BJ (cell line): ENCODE measurements at regions of chr3 and their contacts with region 1.

Region 1: GRCh38 chr3:50327943-50328691 is at the start of gene TUSC2:
- DNase-seq: peak; percentile 74
- H3K4me3 ChIP-seq: peak within 1 kb of the TSS; percentile 72
- H3K27me3 ChIP-seq: no peaks in the 10 kb centered on the region
- CTCF ChIP-seq: no peak
- polyA plus RNA-seq, gene TUSC2: 33.8 and 38.9 TPM in 2 replicates

Region 2: GRCh38 chr3:50298836-50299637 is 29.1 kb before region 1 on chr3 and contains the starts of genes HYAL3 and NAA80:
- CTCF ChIA-PET with region 1: interaction called, 20 read pairs
- POLR2A ChIA-PET with region 1: interaction called, 3 read pairs
- DNase-seq: peak; percentile 98
- H3K4me3 ChIP-seq: peak within 1 kb of the TSS; percentile 54
- H3K27me3 ChIP-seq: no peaks in the 10 kb centered on the region
- CTCF ChIP-seq: peak; percentile 41
- polyA plus RNA-seq, gene HYAL3: 7.1 and 8.5 TPM in 2 replicates
- polyA plus RNA-seq, gene NAA80: 3.6 and 5.8 TPM in 2 replicates

Region 3: DNA sequence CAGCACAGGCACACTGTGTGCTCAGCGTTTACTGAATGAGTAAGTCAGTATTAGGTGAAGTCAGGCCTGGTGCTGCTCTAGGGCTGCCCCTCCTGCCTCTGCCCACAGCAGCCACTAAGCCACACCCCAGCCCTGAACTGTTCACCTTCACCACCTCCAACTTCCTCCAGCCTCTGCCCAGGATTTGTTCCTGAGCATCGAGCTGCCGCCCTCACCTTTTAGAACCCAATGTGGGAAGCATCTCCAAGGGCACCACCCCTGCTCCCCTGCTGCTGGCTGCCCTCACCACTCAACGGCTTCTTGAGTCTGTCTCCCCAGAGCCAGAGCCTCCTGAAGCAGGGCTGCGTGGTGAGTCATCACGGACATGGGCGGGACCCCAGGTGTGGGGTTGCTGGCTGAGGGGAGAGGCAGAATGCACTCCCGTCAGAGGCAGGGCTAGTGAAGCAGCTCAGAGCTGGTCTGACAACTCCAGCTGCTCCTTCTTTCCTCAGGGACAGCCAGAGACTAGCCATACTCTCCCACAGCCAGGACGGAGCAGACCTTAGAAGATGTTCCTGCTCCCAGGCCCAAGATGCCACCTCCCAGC is 11.4 kb before region 1 on chr3:
- CTCF ChIA-PET with region 1: interaction called, 15 read pairs
- POLR2A ChIA-PET with region 1: no interaction called
- DNase-seq: no peak
- H3K4me3 ChIP-seq: no peak overlapping the region
- H3K27me3 ChIP-seq: no peaks in the 10 kb centered on the region
- CTCF ChIP-seq: no peak

Region 4: GRCh38 chr3:50388016-50388719 is 60.1 kb after region 1 on chr3:
- CTCF ChIA-PET with region 1: no interaction called
- POLR2A ChIA-PET with region 1: no interaction called
- DNase-seq: no peak
- H3K4me3 ChIP-seq: no peak overlapping the region
- H3K27me3 ChIP-seq: peaks cover 12% of the 10 kb centered on the region
- CTCF ChIP-seq: peak; percentile 23; the same call in 1 of the 2 replicates